ENCODE measurements at regions of chr10 and their contacts with region 1.

Region 1: DNA sequence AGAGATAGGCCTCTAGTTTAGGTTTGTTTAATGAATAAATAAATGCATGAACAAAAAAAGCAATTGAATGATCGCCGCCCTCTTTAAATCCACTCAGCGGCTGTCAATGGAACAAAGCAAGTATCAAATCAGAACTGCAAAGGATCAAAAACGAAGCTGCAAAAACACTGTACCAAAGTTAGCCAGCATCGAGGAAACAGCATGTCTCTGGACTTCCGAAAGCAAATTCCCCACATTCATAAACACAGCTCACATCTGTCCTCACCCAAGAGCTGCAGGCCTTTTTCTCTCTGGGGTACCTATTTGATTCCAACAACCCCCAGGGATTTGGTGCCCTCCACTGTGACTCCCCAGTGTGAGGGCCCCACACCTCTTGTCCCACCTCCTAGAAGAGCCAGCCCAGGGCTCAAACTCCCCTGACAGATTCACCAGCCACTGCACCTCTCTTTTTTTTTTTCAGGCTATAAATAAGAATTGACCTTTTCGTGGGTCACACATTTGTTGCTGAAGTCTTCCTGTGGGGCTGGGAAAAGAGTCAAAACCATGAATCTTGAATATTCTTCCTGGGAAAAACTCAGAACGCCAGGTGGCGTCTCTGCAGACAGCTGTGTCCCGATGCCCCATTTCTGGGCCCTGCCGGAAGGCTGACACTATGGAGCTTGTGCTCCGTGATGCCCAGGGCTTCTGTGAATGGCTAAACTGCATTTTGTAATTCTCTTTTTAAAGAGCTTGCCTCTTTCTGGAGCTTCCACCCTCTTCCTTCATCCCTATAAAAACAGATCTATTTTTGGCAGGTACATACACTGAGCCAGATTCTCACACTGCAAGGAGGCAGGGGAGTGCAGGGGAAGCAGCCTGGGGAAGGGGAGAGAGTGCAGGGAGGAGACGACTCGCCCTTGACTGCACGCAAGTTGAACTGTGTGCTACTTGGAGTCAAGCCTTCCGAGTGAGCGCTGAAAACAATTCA is 51.7 kb downstream of the HSPA12A start:
- DNase-seq: peak; percentile 32 to 89 (median 72)

Region 2: DNA sequence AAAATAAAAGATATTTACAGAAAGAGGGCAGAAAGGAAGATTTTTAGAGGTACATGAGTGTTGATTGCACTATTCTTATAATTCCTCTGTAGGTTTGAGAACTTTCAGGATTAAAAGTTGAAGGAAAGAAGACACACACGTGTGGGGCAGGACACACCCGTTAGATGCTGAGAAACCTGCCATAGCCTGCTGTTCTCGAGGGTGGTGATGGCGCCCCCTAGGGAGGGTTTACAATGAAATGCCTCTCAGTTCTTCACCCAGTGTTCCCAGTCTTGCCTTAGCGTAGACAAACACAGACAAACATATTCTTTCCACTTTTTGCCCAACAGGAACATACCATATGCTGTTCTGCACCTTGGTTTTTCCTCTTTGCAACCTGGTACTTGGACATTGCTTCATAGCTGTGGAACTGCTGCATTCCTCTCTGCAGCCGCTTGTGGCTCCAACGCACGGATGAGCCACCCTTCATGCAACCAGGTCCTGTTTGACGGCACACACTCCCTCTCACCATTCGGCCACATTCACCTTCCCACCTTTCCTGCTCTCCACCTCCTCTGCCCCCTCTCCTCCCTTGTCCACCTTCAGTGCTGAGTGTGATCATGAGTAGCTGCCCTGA is 75.0 kb after region 1 on chr10:
- intact Hi-C with region 1: loop called (anchors 5 kb)
- DNase-seq: peak; percentile 35 to 93 (median 77)

Region 3: GRCh38 chr10:116787893-116788665 is 97.4 kb after region 1 on chr10:
- intact Hi-C with region 1: loop called (anchors 5 kb)
- DNase-seq: peak; percentile 69 to 95 (median 89)